ENCODE measurements at regions of chr9 and their contacts with region 1.

Region 1: DNA sequence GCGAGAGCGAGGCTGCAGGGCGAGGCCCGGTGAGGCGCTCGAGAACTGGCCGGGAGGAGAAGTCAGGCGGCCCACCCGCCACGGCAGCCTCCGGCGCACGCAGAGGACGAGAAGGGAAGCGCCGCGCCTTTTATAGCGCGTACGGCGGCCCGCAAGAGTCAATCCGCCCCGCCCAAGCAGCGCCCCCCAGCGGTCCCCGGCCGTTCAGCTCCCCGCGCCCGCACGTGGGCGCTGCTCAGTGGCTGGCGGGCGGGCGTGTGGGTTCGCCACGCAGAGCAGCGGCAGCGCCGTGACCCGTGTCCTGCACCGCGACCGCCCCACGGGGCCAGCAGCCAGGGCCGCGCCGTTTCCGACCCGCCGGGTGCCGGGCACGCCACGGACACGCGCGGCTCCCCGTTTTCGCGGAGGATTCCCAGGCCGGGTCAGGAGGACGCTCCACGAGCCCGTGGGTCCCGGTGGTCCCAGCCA is 14.6 kb downstream of the LCN10 start:
- DNase-seq: peak in 1 of 2 experiments; percentile 93
- H3K4me3 ChIP-seq: peak overlapping the region; percentile 89 to 98 (median 95)
- H3K27ac ChIP-seq: peak overlapping the region; percentile 66; the same call in 1 of the 2 replicates
- H3K4me1 ChIP-seq: peaks cover 3 to 16% (median 5%) of the 10 kb centered on the region in 4 experiments
- H3K27me3 ChIP-seq: peaks cover 0 to 9% (median 5%) of the 10 kb centered on the region in 4 experiments; a peak in 5 of 7 replicates
- CTCF ChIP-seq: peak in 2 of 3 experiments; percentile 79 to 96; a peak in 3 of 4 replicates
- EP300 ChIP-seq: no peak; a peak in 1 of 3 replicates
- POLR2A ChIP-seq: peak in 1 of 2 experiments; percentile 99; a peak in 2 of 3 replicates
- RAD21 ChIP-seq: 0 out of 4 replicates have a peak, but pooled peaks of 1 of the 2 experiments have one; percentile 10

Region 2: GRCh38 chr9:136012651-136013050 is 715.5 kb before region 1 on chr9:
- CTCF ChIA-PET with region 1: no interaction called
- POLR2A ChIA-PET with region 1: no interaction called
- DNase-seq: no peak
- H3K4me3 ChIP-seq: no peak overlapping the region
- H3K27ac ChIP-seq: no peak overlapping the region
- H3K4me1 ChIP-seq: peaks cover 0 to 50% (median 26%) of the 10 kb centered on the region in 4 experiments; a peak in 6 of 7 replicates
- H3K27me3 ChIP-seq: no peaks in the 10 kb centered on the region
- CTCF ChIP-seq: no peak
- EP300 ChIP-seq: no peak
- POLR2A ChIP-seq: no peak
- RAD21 ChIP-seq: no peak

Region 3: DNA sequence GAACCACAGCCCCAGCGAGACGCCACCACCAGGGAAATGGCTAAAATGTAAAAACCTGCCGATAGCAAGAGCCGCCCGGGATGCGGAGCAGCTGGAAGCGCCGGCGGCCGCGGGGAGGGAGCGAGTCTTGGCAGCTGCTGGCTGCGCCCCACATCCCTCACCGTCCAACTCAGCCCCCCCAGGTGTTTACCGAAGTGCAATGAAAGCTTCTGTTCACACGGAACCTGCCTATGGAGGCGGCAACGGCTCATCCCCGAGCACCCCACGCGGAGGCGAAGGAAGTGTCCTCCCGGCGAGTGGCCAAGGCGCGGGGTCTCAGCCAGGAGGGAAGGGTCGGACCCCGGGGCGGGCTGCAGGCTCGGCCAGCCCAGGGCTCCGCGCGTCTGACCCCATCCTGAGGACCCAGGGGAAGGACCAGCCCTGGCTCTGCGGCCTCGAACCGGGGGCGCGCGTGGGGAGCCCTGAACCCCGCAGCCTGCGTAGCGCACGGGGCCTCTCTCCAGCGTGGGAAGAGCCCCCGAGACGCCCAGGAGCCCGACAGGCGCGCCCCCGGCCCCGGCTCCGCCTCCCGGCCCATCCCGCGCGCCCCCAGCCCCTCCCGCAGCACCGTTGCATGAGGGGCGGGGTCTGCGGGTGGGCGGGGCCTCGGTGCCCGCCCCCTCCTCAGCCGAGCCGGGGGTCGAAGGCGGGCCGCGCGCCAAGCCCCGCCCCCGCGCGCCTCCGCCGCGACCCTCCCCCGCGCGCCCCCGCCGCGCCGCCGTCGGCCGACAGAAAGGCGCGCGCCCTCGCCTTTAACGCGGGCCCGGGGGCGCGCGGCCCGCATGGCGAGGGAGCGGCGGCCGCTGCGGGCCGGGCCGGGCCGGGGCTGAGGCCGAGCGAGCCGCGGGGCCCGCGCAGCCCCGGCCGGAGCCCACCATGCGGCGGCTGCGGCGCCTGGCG is 16.1 kb before region 1 on chr9 and contains the start of gene DIPK1B:
- CTCF ChIA-PET with region 1: interaction called, 62 read pairs
- POLR2A ChIA-PET with region 1: interaction called, 223 read pairs
- DNase-seq: peak in 1 of 2 experiments; percentile 86
- H3K4me3 ChIP-seq: peak within 1 kb of the TSS; percentile 65 to 94 (median 78)
- H3K27ac ChIP-seq: no peak within 1 kb of the TSS; the same call in 1 of the 2 replicates
- H3K4me1 ChIP-seq: peaks cover 0 to 12% (median 6%) of the 10 kb centered on the region in 4 experiments; a peak in 5 of 7 replicates
- H3K27me3 ChIP-seq: peaks cover 0 to 4% (median 3%) of the 10 kb centered on the region in 4 experiments; a peak in 4 of 7 replicates
- CTCF ChIP-seq: no peak
- EP300 ChIP-seq: no peak
- POLR2A ChIP-seq: no peak; a peak in 1 of 3 replicates
- RAD21 ChIP-seq: no peak
- total RNA-seq, gene DIPK1B: 32.3 and 35.3 TPM in 2 replicates

Region 4: GRCh38 chr9:136757328-136757727 is 29.2 kb after region 1 on chr9:
- CTCF ChIA-PET with region 1: interaction called, 24 read pairs
- POLR2A ChIA-PET with region 1: interaction called, 34 read pairs
- DNase-seq: no peak
- H3K4me3 ChIP-seq: no peak overlapping the region
- H3K27ac ChIP-seq: no peak overlapping the region
- H3K4me1 ChIP-seq: peaks cover 0 to 6% (median 2%) of the 10 kb centered on the region in 4 experiments; a peak in 4 of 7 replicates
- H3K27me3 ChIP-seq: no peaks in the 10 kb centered on the region
- CTCF ChIP-seq: no peak
- EP300 ChIP-seq: no peak
- POLR2A ChIP-seq: no peak
- RAD21 ChIP-seq: no peak

Region 5: DNA sequence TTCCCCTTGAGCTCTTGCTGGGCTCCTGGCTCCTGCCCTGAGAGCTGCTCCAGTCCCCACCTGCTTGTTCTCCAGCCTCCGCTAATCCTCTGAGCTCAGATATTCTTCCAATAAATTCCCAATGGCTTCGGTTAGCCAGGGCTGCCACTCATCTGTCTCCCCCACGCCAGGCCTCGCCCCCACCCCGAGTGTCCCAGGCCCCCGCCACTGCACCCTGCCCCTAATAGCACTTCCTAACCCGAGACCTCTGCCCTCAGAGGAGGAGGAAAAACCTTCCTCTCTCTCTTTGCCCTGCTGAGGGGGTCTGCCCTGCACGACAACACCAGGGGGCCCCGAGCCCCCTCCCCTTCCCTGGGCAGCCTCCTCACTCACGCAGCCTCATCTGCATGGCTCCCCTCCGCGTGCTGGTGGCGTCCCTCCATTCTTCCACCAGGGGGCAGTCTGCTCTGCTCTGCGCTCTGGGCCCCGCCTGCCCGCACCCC is 41.6 kb after region 1 on chr9:
- CTCF ChIA-PET with region 1: interaction called, 9 read pairs
- POLR2A ChIA-PET with region 1: interaction called, 10 read pairs
- DNase-seq: peak in 1 of 2 experiments; percentile 88
- H3K4me3 ChIP-seq: peak overlapping the region in 2 of 4 experiments; percentile 20 to 56; a peak in 3 of 8 replicates
- H3K27ac ChIP-seq: no peak overlapping the region
- H3K4me1 ChIP-seq: no peaks in the 10 kb centered on the region
- H3K27me3 ChIP-seq: no peaks in the 10 kb centered on the region
- CTCF ChIP-seq: peak; percentile 57 to 93 (median 72)
- EP300 ChIP-seq: no peak
- POLR2A ChIP-seq: no peak
- RAD21 ChIP-seq: peak in 1 of 2 experiments; percentile 11; a peak in 2 of 4 replicates

Measured in H1 (cell line).